Activated CD4-positive, alpha-beta T cell treated with anti-CD3 and anti-CD28 coated beads for 36 hours (primary cell): ENCODE measurements at regions of chr3 and their contacts with region 1.

Region 1: DNA sequence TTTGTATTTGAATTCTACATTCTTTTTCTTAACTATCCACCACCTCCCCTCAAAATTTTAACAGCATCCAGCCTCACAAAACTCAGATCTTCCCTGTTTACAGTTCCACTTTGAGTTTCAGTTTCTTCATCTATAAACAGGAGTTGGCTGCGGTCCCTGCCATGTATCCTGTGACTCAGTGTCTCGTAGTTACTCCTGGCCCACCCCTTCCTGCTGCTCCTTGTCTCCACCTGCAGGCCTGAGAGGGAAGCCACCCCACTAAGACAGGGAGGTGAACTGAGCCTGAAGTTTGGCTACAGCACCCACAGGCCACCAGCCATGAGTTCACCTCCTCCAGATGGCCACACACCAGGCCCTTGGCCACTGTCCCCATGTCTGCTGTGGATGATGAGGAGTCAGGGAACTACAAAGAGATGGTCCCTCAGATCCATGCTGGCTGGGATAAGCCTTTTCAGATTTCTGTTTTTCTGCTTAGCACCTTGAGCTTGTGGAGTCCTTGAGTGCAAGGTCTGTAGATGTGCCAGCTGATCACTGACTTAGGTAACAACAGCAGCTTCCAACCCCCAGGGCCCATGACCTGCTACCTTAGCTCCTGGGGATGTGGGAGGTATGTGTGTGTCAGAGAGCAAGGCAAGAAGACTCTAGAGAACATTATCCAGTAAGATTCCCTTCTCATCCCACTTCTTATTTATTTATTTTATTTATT is 37.5 kb downstream of the CD86 start:
- DNase-seq: peak; percentile 85
- ATAC-seq: peak; percentile 97
- H3K4me3 Mint-ChIP-seq: no peak overlapping the region
- H3K27ac Mint-ChIP-seq: peak overlapping the region; percentile 79
- H3K4me1 Mint-ChIP-seq: peaks cover 21% of the 10 kb centered on the region
- H3K27me3 Mint-ChIP-seq: no peaks in the 10 kb centered on the region

Region 2: DNA sequence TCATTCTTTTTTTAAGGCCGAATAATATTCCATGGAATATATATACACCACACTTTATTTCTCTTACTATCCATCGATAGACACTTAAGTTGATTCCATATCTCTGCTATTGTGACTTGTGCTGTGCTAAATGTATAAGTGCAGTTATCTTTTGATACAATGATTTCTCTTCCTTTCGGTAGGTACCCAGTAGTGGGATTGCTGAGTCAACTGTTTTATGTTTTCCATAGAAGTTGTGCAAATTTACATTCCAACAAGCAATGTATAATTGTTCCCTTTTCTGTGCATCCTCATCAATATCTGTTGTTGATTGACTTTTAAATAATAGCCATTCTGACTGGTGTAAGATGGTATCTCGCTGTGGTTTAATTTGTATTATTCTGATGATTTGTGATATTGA is 1103.6 kb before region 1 on chr3:
- CTCF ChIA-PET with region 1: no interaction called
- POLR2A ChIA-PET with region 1: no interaction called
- intact Hi-C with region 1: no loop called
- DNase-seq: no peak
- ATAC-seq: no peak
- H3K4me3 Mint-ChIP-seq: no peak overlapping the region
- H3K27ac Mint-ChIP-seq: no peak overlapping the region
- H3K4me1 Mint-ChIP-seq: no peaks in the 10 kb centered on the region
- H3K27me3 Mint-ChIP-seq: peaks cover 8% of the 10 kb centered on the region

Region 3: GRCh38 chr3:121855555-121855954 is 237.1 kb before region 1 on chr3:
- CTCF ChIA-PET with region 1: no interaction called
- POLR2A ChIA-PET with region 1: no interaction called
- intact Hi-C with region 1: loop called in 1 of 2 experiments (anchors 1 kb)
- DNase-seq: no peak
- ATAC-seq: peak; percentile 36
- H3K4me3 Mint-ChIP-seq: no peak overlapping the region
- H3K27ac Mint-ChIP-seq: no peak overlapping the region
- H3K4me1 Mint-ChIP-seq: no peaks in the 10 kb centered on the region
- H3K27me3 Mint-ChIP-seq: no peaks in the 10 kb centered on the region

Region 4: DNA sequence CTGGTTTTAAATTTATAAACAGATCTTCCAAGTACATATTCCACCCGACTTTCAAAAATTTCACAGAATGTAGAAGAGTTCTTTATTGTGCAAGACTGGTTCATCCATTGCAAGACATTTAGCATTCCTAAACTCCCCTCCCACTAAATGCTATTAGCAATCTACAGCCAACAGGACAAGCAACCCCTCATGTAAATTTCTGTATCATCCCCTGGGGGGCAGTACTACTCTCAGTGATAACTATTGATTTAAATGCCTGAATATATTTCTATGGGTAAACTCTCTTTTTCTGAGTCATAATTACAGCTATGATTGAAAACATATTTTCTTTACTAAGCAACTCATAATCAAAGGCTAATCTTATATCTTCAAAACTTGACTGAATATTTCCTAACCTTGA is 209.1 kb before region 1 on chr3:
- CTCF ChIA-PET with region 1: no interaction called
- POLR2A ChIA-PET with region 1: no interaction called
- intact Hi-C with region 1: loop called (anchors 1 to 2 kb)
- DNase-seq: peak; percentile 5
- ATAC-seq: peak; percentile 60
- H3K4me3 Mint-ChIP-seq: no peak overlapping the region
- H3K27ac Mint-ChIP-seq: no peak overlapping the region
- H3K4me1 Mint-ChIP-seq: no peaks in the 10 kb centered on the region
- H3K27me3 Mint-ChIP-seq: no peaks in the 10 kb centered on the region

Region 5: DNA sequence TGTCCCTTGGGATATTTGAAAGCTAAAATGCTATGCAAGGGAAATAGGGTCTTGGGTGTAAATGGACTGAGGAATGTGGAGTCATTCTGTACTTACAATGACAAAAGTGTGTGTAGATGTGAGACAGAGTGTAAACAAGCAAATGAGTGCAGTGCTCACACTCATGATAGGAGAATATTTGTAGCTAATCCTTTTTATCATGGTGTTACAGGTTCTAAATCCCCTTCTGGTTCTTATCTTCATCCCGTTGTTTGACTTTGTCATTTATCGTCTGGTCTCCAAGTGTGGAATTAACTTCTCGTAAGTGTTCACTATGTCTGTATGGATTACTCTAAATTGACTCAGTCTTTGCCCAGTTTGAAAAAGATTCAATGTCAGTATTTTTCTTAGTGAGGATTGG is 167.9 kb before region 1 on chr3:
- CTCF ChIA-PET with region 1: no interaction called
- POLR2A ChIA-PET with region 1: no interaction called
- intact Hi-C with region 1: no loop called
- DNase-seq: no peak
- ATAC-seq: no peak
- H3K4me3 Mint-ChIP-seq: no peak overlapping the region
- H3K27ac Mint-ChIP-seq: no peak overlapping the region
- H3K4me1 Mint-ChIP-seq: no peaks in the 10 kb centered on the region
- H3K27me3 Mint-ChIP-seq: no peaks in the 10 kb centered on the region

Region 6: GRCh38 chr3:121995161-121996137 is 97.2 kb before region 1 on chr3:
- CTCF ChIA-PET with region 1: no interaction called
- POLR2A ChIA-PET with region 1: no interaction called
- intact Hi-C with region 1: loop called (anchors 5 kb)
- DNase-seq: peak; percentile 59
- ATAC-seq: peak; percentile 75
- H3K4me3 Mint-ChIP-seq: no peak overlapping the region
- H3K27ac Mint-ChIP-seq: no peak overlapping the region
- H3K4me1 Mint-ChIP-seq: peaks cover 26% of the 10 kb centered on the region
- H3K27me3 Mint-ChIP-seq: no peaks in the 10 kb centered on the region

Region 7: DNA sequence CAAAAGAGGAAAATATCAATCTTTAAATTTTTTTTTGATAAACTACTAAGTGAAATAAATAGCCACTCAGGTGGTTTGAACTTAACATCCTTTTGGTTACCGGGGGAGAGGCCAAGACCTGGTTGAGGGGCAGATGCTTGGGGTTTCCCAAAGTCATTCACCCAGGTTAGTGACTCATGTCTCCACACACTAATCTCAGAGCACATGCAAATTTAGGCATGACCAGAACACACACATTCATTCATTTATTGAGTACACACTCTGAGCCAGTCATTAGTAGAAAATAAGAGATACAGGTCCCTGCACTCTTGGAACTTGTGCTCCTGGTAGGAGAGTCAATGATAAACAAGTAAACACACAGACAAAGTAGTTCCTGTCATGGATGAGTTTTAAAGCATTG is 77.9 kb before region 1 on chr3:
- CTCF ChIA-PET with region 1: no interaction called
- POLR2A ChIA-PET with region 1: no interaction called
- intact Hi-C with region 1: loop called in 1 of 2 experiments (anchors 2 kb)
- DNase-seq: peak; percentile 47
- ATAC-seq: peak; percentile 96
- H3K4me3 Mint-ChIP-seq: no peak overlapping the region
- H3K27ac Mint-ChIP-seq: no peak overlapping the region
- H3K4me1 Mint-ChIP-seq: peaks cover 12% of the 10 kb centered on the region
- H3K27me3 Mint-ChIP-seq: peaks cover 23% of the 10 kb centered on the region

Region 8: DNA sequence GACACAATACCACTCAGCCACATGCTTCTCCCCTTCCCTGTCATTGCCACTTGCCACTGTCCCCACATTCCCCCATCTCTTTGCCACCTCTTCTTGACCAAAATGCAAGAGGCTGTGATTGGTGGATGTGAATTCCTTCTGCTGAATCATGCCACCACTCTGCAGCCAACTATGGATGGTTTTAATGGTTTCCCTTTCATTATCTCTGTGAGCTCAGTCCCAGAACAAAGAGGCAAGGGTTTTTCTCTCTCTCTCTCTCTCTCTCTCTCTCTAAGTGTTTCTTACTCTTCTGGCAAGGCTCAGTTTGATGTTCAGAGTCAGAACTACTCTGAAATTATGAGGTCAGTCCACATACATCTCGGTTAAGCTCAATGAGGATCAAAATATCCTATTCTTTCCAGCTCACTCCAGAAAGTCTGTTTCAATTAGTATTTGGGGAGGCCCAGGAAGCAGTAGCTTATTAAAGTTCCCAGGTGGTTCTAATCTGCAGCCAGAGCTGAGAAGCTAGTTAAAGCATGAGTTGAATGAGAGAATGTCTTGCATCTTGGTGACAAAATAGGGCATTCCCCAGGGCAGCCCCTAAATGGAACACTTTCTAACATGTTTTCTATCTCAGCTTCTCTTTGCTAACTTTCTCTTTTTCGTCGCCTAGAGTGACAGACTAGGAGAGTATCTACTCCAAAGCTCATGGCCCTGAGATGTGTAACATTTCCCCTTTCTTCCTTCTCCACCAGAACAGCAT is 62.1 kb before region 1 on chr3:
- CTCF ChIA-PET with region 1: no interaction called
- POLR2A ChIA-PET with region 1: no interaction called
- intact Hi-C with region 1: loop called in 1 of 2 experiments (anchors 2 kb)
- DNase-seq: peak; percentile 45
- ATAC-seq: peak; percentile 93
- H3K4me3 Mint-ChIP-seq: peak overlapping the region; percentile 15
- H3K27ac Mint-ChIP-seq: peak overlapping the region; percentile 58
- H3K4me1 Mint-ChIP-seq: peaks cover 17% of the 10 kb centered on the region
- H3K27me3 Mint-ChIP-seq: peaks cover 3% of the 10 kb centered on the region

Region 9: DNA sequence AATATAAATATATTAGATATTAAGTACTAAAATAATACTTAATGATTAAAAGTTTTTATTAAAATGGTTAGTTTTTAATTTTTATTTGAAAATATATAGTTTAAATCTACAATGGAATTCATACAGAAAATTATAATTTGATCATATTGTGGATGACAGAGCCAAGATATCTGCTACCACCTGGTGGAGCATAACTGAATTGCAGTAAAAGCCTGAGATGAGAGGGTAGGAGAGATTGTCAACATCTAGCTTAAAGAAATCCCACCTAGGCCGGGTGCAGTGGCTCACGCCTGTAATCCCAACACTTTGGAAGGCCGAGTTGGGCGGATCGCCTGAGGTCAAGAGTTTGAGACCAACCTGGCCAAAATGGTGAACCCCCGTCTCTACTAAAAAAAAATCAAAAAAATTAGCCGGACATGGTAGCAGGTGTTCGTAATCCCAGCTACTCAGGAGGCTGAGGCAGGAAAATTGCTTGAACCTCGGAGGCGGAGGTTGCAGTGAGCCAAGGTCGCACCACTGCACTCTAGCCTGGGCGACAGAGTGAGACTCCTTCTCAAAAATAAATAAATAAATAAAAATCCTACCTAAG is 207.4 kb after region 1 on chr3:
- CTCF ChIA-PET with region 1: interaction called, 15 read pairs
- POLR2A ChIA-PET with region 1: no interaction called
- intact Hi-C with region 1: no loop called
- DNase-seq: peak; percentile 53
- ATAC-seq: peak; percentile 59
- H3K4me3 Mint-ChIP-seq: no peak overlapping the region
- H3K27ac Mint-ChIP-seq: no peak overlapping the region
- H3K4me1 Mint-ChIP-seq: peaks cover 18% of the 10 kb centered on the region
- H3K27me3 Mint-ChIP-seq: no peaks in the 10 kb centered on the region